ENCODE measurements at regions of chr7 and their contacts with region 1.

Region 1: GRCh38 chr7:149759111-149759860 is 14.1 kb downstream of the ZNF467 start:
- DNase-seq: no peak
- H3K4me3 ChIP-seq: no peak overlapping the region
- H3K27ac ChIP-seq: no peak overlapping the region
- H3K4me1 ChIP-seq: no peaks in the 10 kb centered on the region
- H3K27me3 ChIP-seq: no peaks in the 10 kb centered on the region
- CTCF ChIP-seq: no peak

Region 2: GRCh38 chr7:149707448-149707886 is 51.8 kb before region 1 on chr7:
- CTCF ChIA-PET with region 1: no interaction called
- dilution Hi-C with region 1: no loop called
- in situ Hi-C with region 1: no loop called
- intact Hi-C with region 1: no loop called
- DNase-seq: peak; percentile 40
- H3K4me3 ChIP-seq: no peak overlapping the region
- H3K27ac ChIP-seq: no peak overlapping the region
- H3K4me1 ChIP-seq: no peaks in the 10 kb centered on the region
- H3K27me3 ChIP-seq: no peaks in the 10 kb centered on the region
- CTCF ChIP-seq: no peak

Region 3: DNA sequence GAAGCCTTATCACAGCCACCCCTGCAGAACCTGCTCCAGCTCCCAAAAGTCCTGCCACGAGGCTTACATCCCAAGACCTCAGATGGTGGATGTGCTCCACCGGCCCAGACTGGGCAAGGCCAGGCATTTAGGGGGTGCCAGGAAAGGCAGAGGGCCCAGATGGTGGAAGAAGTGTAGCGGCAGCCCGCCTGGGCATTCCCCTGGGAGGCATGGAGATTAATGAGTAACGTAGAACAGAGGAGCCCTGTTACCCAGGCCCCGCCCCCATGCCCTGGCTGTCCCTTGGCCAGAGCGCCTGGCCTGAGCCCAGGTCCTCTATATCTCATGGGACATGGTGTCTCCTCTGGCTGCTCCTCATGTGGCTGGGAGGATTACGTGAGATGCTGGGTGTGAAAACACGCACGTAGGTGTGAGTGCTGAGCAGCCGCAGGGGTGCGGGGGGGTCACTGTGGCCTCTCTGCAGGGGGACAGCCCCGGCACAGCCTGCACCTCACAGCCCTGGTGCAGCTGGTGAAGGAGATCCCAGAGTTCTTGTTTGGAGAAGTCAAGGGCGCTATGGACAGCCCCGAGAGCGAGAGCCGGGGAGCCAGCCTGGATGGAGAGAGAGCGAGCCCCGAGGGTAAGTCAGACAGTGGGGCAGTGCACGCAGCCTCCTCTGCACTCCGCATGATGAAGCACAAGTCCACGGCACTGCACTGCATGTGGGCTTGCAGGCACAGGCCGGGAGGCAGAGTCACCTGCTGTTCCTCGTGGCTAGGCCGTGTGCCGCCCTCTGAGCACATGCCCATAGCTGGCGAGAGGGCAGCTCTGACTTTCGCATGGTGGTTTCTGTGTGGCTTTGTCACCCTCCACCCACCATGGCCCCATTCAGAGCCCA is 38.7 kb before region 1 on chr7:
- CTCF ChIA-PET with region 1: no interaction called
- dilution Hi-C with region 1: loop called (anchors 5 kb)
- in situ Hi-C with region 1: no loop called
- intact Hi-C with region 1: no loop called
- DNase-seq: no peak
- H3K4me3 ChIP-seq: no peak overlapping the region
- H3K27ac ChIP-seq: no peak overlapping the region
- H3K4me1 ChIP-seq: peaks cover 22% of the 10 kb centered on the region
- H3K27me3 ChIP-seq: no peaks in the 10 kb centered on the region
- CTCF ChIP-seq: no peak